Activated naive CD4-positive, alpha-beta T cell treated with anti-CD3 and anti-CD28 coated beads for 36 hours (primary cell): ENCODE measurements at regions of chr3 and their contacts with region 1.

Region 1: GRCh38 chr3:113051302-113051711 is 60.5 kb downstream of the GTPBP8 start:
- DNase-seq: peak; percentile 96
- H3K4me3 Mint-ChIP-seq: no peak overlapping the region
- H3K27ac Mint-ChIP-seq: no peak overlapping the region
- H3K4me1 Mint-ChIP-seq: peaks cover 12% of the 10 kb centered on the region
- H3K27me3 Mint-ChIP-seq: no peaks in the 10 kb centered on the region

Region 2: DNA sequence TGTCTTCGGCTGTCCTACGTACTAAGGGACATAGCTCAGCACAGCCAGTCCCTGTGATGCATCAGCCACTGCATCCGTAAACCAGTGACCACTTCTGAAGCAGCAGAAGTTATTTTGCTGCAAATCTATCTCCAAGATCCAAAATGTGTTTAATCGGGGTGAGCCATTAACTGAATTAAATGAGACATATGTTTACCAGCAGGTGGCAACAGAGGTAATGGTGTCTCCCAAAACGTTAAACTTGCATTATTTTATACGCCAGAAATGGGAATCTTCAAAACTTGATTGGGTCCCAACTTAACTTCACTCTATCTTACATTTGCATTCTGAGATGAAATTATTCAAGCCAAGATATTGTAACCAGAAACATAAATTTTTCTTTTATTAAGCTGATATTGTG is 84.8 kb after region 1 on chr3:
- CTCF ChIA-PET with region 1: no interaction called
- intact Hi-C with region 1: loop called (anchors 1 kb)
- DNase-seq: no peak
- H3K4me3 Mint-ChIP-seq: no peak overlapping the region
- H3K27ac Mint-ChIP-seq: no peak overlapping the region
- H3K4me1 Mint-ChIP-seq: peaks cover 3% of the 10 kb centered on the region
- H3K27me3 Mint-ChIP-seq: no peaks in the 10 kb centered on the region